ENCODE measurements at regions of chr3 and their contacts with region 1.

Region 1: DNA sequence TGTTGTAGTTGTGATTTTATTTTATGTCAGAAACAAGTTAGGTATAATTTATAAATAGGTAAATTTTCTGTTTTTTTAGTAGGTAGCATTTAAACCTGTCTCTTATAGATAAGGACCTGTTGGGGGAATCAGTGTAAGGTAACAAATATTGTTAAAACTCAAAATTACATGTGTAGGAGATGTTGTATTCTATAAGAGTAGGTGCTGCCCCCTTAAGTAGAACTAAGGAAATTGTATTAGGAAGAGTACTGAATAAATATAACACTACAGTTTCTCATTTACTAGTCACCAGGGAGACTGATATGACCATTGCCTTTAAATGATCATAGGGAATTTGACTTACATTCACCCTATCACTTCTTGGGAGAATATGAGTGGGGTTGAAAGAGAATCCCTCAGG is 31.2 kb downstream of the SLC25A36 start:
- DNase-seq: peak in 1 of 2 donors; percentile 24
- ATAC-seq: peak in 1 of 3 donors; percentile 60
- H3K4me3 ChIP-seq: no peak overlapping the region
- H3K4me3 Mint-ChIP-seq: no peak overlapping the region
- H3K27ac ChIP-seq: no peak overlapping the region
- H3K27ac Mint-ChIP-seq: no peak overlapping the region
- H3K4me1 ChIP-seq: no peaks in the 10 kb centered on the region
- H3K4me1 Mint-ChIP-seq: no peaks in the 10 kb centered on the region
- H3K27me3 ChIP-seq: no peaks in the 10 kb centered on the region
- H3K27me3 Mint-ChIP-seq: no peaks in the 10 kb centered on the region
- CTCF ChIP-seq: peak; percentile 36

Region 2: DNA sequence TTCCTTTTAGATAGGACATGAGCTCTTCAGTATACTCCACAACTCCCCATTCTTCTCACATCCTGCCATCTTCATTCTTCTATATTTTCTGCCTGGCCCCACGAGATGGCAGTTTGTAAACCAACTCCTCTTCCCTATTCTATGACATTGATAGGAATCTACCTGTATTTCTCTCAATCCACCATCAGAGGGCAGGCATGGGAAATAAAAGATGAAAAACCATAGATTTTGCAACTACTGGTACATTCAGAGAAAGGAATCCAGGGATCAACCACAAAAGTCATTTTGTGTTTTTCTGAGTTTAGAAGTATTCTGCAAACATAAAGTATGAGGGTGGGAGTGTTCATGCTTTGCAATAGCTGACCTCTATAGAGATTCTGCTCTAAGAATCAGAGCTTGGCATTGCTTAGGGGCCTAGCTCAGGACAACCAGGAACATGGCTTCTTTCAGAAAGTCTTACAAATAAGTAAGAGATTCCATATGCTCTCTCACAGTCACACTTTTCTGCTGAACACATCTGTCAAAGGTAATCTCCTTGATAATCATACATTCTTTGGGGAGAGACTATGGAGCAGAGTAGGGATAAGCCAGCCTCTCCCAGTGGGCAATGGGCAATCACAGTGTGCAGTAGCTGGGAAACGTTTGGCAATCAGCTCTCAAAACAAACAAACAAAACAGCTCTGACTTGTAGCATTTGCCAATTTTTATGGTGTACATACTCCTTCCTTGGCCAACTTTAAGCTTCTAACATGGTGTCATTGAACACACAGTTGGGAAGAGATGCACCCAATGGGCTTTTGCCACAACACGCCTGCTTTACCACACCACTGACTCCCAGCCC is 74.3 kb before region 1 on chr3:
- intact Hi-C with region 1: loop called (anchors 1 kb)
- DNase-seq: peak in 1 of 2 donors; percentile 65
- ATAC-seq: peak in 2 of 3 donors; percentile 57 to 70
- H3K4me3 ChIP-seq: no peak overlapping the region
- H3K4me3 Mint-ChIP-seq: no peak overlapping the region
- H3K27ac ChIP-seq: no peak overlapping the region
- H3K27ac Mint-ChIP-seq: no peak overlapping the region
- H3K4me1 ChIP-seq: no peaks in the 10 kb centered on the region
- H3K4me1 Mint-ChIP-seq: no peaks in the 10 kb centered on the region
- H3K27me3 ChIP-seq: no peaks in the 10 kb centered on the region
- H3K27me3 Mint-ChIP-seq: peaks cover 12 to 35% of the 10 kb centered on the region in 2 donors
- CTCF ChIP-seq: peak; percentile 48

Region 3: GRCh38 chr3:140922634-140923033 is 50.2 kb before region 1 on chr3:
- intact Hi-C with region 1: loop called (anchors 5 kb)
- DNase-seq: peak in 1 of 2 donors; percentile 45
- ATAC-seq: peak in 2 of 3 donors; percentile 35 to 54
- H3K4me3 ChIP-seq: no peak overlapping the region
- H3K4me3 Mint-ChIP-seq: no peak overlapping the region
- H3K27ac ChIP-seq: no peak overlapping the region
- H3K27ac Mint-ChIP-seq: no peak overlapping the region
- H3K4me1 ChIP-seq: no peaks in the 10 kb centered on the region
- H3K4me1 Mint-ChIP-seq: no peaks in the 10 kb centered on the region
- H3K27me3 ChIP-seq: peaks cover 2% of the 10 kb centered on the region
- H3K27me3 Mint-ChIP-seq: peaks cover 14 to 62% of the 10 kb centered on the region in 2 donors
- CTCF ChIP-seq: no peak

Region 4: GRCh38 chr3:140941434-140942220 is 31.2 kb before region 1 on chr3 and contains the start of gene SLC25A36:
- intact Hi-C with region 1: loop called (anchors 1 kb)
- DNase-seq: peak; percentile 92 to 100
- ATAC-seq: peak; percentile 95 to 99 (median 95)
- H3K4me3 ChIP-seq: peak within 1 kb of the TSS; percentile 92
- H3K4me3 Mint-ChIP-seq: peak within 1 kb of the TSS; percentile 96
- H3K27ac ChIP-seq: peak within 1 kb of the TSS; percentile 88
- H3K27ac Mint-ChIP-seq: peak within 1 kb of the TSS; percentile 94 to 99
- H3K4me1 ChIP-seq: no peaks in the 10 kb centered on the region
- H3K4me1 Mint-ChIP-seq: peaks cover 38 to 53% of the 10 kb centered on the region in 2 donors
- H3K27me3 ChIP-seq: no peaks in the 10 kb centered on the region
- H3K27me3 Mint-ChIP-seq: peaks cover under 1 to 8% of the 10 kb centered on the region in 2 donors
- CTCF ChIP-seq: no peak
- total RNA-seq, gene SLC25A36: 107 to 127 (median 126) TPM

Measured in natural killer cell (primary cell).